Vagina (tissue), 2 donors: ENCODE measurements at regions of chr18 and their contacts with region 1.

Region 1: DNA sequence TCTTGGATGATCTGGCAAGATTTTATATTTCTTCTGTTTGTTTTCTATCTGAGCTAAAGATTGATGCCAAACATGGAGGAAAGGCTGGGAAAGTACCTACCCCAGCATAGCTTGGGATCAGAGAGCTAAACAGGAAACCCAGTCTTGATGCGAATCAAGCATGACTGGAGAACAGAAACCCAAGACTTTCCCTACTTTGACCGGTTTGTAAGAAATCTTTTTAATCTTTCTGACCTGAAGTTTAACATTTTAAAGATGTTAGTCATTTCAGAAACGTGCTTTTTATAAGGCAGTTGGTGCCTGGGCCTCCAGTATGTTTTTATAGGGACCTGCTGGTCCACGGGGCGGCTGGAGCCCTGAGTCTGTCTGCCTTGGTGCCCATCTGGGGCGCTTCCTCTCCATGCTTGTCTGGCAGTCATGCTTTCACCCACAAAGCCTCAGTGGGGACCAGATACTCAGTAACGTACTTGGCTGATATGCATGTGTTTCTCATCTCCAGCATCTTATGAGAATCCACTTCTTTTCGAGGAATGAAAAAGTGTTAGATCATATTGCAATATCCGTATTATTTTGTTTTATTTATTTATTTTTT is 266.5 kb downstream of the PTGR3 start:
- DNase-seq: no peak
- H3K4me3 ChIP-seq: no peak overlapping the region
- H3K27ac ChIP-seq: no peak overlapping the region
- H3K4me1 ChIP-seq: no peaks in the 10 kb centered on the region
- H3K27me3 ChIP-seq: no peaks in the 10 kb centered on the region
- CTCF ChIP-seq: no peak
- POLR2A ChIP-seq: no peak

Region 2: GRCh38 chr18:73043226-73044020 is 1899.0 kb before region 1 on chr18:
- intact Hi-C with region 1: loop called (anchors 5 kb)
- DNase-seq: no peak
- H3K4me3 ChIP-seq: no peak overlapping the region
- H3K27ac ChIP-seq: no peak overlapping the region
- H3K4me1 ChIP-seq: no peaks in the 10 kb centered on the region
- H3K27me3 ChIP-seq: no peaks in the 10 kb centered on the region
- CTCF ChIP-seq: no peak
- POLR2A ChIP-seq: no peak

Region 3: DNA sequence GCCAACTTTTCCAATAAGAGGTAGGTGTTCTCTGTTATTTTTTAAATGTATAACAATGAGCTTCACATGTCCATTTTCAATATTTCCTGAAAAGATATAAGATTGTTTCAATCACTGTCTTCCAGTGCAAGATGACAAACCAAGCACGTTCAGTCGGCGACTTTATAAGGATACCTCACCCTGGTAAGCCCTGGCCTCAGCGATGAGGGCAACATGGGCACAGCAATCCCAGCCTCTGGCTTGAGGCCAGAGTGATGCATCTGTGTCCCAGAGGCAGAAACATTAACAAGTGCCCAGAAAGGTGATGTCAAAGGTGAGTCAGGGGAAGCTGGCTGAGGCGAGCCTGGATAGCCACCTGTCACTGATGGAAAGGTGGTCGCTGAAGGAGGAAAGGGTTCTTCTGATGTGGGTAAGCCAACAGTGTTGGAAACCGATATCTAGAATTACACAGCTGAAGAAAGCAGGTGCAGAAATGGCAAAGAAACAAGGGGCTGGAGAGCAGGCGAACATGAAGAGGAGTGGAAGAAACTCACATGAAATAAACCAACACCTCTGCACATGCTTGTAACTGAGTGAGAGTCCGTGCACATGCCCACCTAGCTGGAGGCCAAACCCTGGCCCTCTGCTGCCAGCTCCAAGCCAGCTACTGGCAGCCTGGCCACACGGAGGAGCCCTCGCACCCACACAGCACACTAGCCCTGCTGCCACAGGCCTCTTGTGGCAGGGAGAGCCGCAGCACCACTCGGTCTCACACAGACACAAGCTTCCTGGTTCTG is 860.3 kb before region 1 on chr18:
- intact Hi-C with region 1: no loop called
- DNase-seq: no peak
- H3K4me3 ChIP-seq: no peak overlapping the region
- H3K27ac ChIP-seq: no peak overlapping the region
- H3K4me1 ChIP-seq: no peaks in the 10 kb centered on the region
- H3K27me3 ChIP-seq: no peaks in the 10 kb centered on the region
- CTCF ChIP-seq: no peak
- POLR2A ChIP-seq: no peak